GM12878 (cell line): ENCODE measurements at regions of chrX and their contacts with region 1.

Region 1: GRCh38 chrX:39953883-39954282 is 143.9 kb downstream of the BCOR start:
- DNase-seq: no peak
- ATAC-seq: no peak
- H3K4me3 ChIP-seq: no peak overlapping the region
- H3K27ac ChIP-seq: no peak overlapping the region
- H3K4me1 ChIP-seq: no peaks in the 10 kb centered on the region
- H3K27me3 ChIP-seq: no peaks in the 10 kb centered on the region
- CTCF ChIP-seq: no peak
- EP300 ChIP-seq: no peak
- POLR2A ChIP-seq: no peak
- RAD21 ChIP-seq: no peak

Region 2: GRCh38 chrX:40003428-40004245 is 49.8 kb after region 1 on chrX:
- CTCF ChIA-PET with region 1: no interaction called
- POLR2A ChIA-PET with region 1: no interaction called
- RAD21 ChIA-PET with region 1: no interaction called
- SMC1A ChIA-PET with region 1: no interaction called
- in situ Hi-C with region 1: no loop called
- intact Hi-C with region 1: loop called (anchors 5 kb)
- DNase-seq: no peak
- ATAC-seq: no peak
- H3K4me3 ChIP-seq: no peak overlapping the region
- H3K27ac ChIP-seq: no peak overlapping the region
- H3K4me1 ChIP-seq: no peaks in the 10 kb centered on the region
- H3K27me3 ChIP-seq: peaks cover 0 to 6% of the 10 kb centered on the region in 2 experiments; a peak in 3 of 4 replicates
- CTCF ChIP-seq: no peak
- EP300 ChIP-seq: no peak
- POLR2A ChIP-seq: no peak
- RAD21 ChIP-seq: no peak